AG04450 (cell line): ENCODE measurements at regions of chr19 and their contacts with region 1.

Region 1: DNA sequence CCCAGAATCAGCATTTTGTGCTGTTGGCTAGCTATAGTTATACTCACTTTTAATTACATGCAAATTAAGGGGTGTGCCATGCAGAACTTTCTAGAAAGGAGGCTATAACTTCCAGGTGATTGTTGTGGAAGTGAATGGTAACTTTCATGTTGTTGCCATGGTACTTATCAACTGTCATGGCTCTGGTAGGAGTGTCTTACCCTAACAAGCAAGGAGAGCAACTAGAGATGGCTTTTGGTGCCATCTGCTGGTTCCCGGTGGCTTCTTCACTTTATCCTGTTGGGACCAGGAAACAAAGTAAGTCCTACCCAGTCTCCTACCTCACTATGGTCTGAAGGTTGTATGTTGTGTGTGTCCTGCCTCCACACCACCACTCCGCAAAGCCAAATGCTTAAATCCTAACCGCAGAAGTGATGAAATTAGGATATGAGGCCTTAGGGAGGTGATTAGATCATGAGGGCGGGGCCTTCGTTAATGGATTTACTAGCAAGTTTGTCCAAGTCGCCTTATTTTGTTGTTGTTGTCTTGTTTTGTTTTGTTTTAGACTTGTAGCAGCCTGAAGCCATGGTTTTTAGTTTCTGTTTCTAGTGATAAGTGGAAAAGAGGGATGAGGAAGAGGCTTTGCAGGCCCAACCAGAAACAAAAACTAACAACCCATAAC is 22.6 kb downstream of the FBXL12 start:
- DNase-seq: peak; percentile 76
- H3K4me3 ChIP-seq: no peak overlapping the region
- H3K27ac ChIP-seq: no peak overlapping the region
- H3K27me3 ChIP-seq: no peaks in the 10 kb centered on the region
- CTCF ChIP-seq: peak; percentile 86

Region 2: DNA sequence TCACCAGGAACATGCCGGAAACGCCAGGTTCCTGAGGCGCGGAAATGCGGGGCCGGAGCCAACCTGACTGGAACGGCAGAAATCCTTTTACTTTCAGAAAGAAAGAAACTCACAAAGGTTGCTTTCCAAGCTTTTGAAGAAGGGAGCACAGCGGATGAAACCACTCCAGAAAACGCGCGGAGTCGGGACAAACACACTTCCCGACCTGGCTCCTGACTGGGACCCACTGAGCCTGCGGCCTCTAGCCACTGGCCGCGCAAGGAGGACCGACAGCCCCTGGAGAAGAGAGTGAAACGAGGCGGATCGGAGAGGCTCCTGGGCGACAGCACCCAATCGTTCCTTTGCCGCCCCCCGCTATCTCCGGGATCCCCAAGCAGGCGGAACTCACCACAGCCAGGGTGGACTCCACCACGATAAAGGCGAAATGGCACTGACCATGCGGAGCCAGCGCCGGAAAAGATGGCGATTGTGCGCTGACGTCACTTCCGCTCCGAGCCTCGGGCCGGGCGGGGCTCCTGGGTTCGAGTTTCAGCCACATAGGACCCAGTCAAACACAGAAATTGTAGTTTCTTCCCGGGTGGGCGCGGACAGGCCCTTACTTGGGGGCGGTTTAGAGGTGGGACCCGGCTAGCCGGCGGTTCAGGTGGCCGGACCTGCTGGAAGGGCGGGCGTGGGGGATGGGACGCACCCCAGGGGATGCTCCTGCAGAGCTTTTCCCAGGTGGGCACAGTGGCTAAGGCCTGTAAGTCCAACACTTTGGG is 212.0 kb before region 1 on chr19 and contains the start of gene ZNF121:
- CTCF ChIA-PET with region 1: interaction called, 20 read pairs
- POLR2A ChIA-PET with region 1: no interaction called
- DNase-seq: peak; percentile 34
- H3K4me3 ChIP-seq: peak within 1 kb of the TSS; percentile 96
- H3K27ac ChIP-seq: peak within 1 kb of the TSS; percentile 79
- H3K27me3 ChIP-seq: no peaks in the 10 kb centered on the region
- CTCF ChIP-seq: 0 out of 2 replicates have a peak, but pooled peaks have one; percentile 1
- polyA plus RNA-seq, gene ZNF121: 5.3 and 6.1 TPM in 2 replicates

Region 3: DNA sequence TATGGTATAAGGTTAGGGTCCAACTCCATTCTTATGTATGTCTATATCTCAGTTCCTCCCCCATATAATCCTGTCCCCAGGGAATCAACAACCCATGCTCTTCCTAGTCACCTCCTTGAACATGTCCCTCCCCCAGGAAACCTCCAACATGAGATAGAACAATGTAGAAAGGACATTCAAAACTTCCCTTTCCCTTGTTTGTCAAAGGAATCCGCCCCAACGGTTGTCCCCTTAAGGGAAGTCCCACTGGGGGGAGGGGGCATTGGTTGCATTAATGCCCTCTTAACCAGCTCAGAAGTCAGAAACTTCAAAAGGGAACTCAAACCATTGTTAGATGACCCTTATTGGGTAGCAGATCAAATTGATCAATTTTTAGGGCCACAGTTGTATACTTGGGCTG is 168.4 kb before region 1 on chr19:
- CTCF ChIA-PET with region 1: interaction called, 60 read pairs
- POLR2A ChIA-PET with region 1: interaction called, 4 read pairs
- DNase-seq: no peak
- H3K4me3 ChIP-seq: no peak overlapping the region
- H3K27ac ChIP-seq: no peak overlapping the region
- H3K27me3 ChIP-seq: no peaks in the 10 kb centered on the region
- CTCF ChIP-seq: no peak

Region 4: GRCh38 chr19:9834726-9835506 is 38.7 kb after region 1 on chr19 and contains the start of gene PIN1:
- CTCF ChIA-PET with region 1: no interaction called
- POLR2A ChIA-PET with region 1: no interaction called
- DNase-seq: peak; percentile 94
- H3K4me3 ChIP-seq: peak within 1 kb of the TSS; percentile 87
- H3K27ac ChIP-seq: peak within 1 kb of the TSS; percentile 31
- H3K27me3 ChIP-seq: no peaks in the 10 kb centered on the region
- CTCF ChIP-seq: peak; percentile 52
- polyA plus RNA-seq, gene PIN1: 33.6 and 42.7 TPM in 2 replicates